Ascending aorta (tissue), 2 donors: ENCODE measurements at regions of chr21 and their contacts with region 1.

Region 1: DNA sequence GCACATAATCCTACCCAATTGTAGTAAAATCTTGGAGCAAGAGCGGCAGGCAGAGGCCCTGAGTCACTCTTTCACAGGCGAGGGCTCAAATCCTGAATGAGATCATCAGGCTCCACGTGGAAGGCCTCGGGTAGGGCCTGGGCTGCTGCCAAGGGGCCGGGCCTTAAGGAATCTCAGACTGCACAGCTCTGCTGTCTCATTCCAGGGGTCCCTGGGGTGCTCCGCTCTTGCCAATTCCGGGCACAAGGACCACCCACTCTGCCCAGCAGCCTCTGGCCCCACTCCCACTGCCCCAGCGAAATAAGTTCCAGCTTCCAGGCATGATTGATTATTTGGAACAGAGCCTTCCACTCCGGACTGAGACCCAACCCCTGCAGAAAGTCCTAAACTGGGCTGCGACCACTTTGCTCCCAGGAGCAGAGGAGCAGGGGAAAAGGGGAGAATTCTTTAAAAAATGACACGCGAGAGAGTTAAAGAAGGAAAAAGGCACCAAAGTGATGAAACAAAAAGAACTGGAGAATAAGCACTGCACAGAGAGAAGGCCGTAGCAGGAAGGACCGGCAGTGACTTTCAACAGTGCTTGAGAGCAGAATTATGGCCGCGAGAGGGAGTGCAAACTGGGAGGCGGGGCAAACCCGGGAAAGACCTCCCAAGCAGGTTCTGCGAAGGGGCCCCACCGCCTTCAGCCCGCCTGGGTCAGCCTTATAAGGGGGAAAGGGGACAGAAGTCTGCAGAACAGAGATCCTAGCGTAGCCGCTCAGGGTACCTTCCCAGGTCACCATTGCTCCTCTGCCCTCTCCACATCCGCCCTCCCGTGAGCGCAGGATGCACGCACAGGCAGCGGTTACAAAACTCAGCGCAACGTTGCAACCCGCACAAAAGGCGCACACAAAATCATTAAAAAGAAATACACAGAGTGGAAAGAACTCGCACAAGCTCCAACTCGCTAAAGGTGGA is 2.0 kb downstream of the ADAMTS1 start:
- DNase-seq: peak; percentile 82 to 97
- H3K4me3 ChIP-seq: peak overlapping the region; percentile 85 to 94
- H3K27ac ChIP-seq: peak overlapping the region; percentile 94 to 98
- H3K4me1 ChIP-seq: peaks cover 4 to 20% of the 10 kb centered on the region in 2 donors
- H3K27me3 ChIP-seq: no peaks in the 10 kb centered on the region
- CTCF ChIP-seq: peak in 2 of 3 experiments; percentile 32 to 43

Region 2: DNA sequence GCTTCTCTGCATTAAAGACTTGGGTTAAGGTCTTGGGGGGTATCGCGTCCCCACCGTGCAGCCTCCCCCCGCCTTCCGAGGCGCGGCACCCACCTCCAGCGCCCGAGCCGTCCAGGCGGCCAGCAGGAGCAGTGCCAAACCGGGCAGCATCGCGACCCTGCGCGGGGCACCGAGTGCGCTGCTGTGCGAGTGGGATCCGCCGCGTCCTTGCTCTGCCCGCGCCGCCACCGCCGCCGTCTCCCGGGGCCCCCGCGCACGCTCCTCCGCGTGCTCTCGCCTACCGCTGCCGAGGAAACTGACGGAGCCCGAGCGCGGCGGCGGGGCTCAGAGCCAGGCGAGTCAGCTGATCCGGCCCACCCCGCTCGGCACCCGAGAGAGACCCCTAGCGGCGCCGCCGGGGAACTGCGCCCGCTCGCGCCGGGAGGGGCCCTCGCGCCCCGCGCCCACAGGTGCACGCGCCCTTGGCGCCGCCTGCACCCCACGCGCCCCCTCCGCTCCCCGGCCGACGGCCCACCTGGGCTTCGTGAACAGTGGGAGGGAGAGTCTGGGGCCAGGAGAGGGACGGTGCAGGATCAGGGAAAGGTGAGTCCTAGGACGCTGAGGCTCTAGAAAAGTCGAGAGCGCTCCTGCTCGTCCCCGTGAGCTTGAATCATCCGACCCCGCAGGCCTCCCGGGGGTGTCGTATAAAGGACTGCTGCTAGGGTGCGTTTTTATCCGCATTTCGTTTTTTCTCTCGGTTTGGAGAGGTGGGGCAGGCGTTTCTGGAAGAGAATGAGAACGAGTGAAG is 672.6 kb before region 1 on chr21 and contains the start of gene APP:
- intact Hi-C with region 1: loop called (anchors 10 kb)
- DNase-seq: peak; percentile 28 to 90
- H3K4me3 ChIP-seq: peak within 1 kb of the TSS; percentile 96 to 98
- H3K27ac ChIP-seq: peak within 1 kb of the TSS; percentile 82 to 84
- H3K4me1 ChIP-seq: peaks cover 0 to 10% of the 10 kb centered on the region in 2 donors
- H3K27me3 ChIP-seq: no peaks in the 10 kb centered on the region
- CTCF ChIP-seq: peak; percentile 70 to 98 (median 71)
- total RNA-seq, gene APP: 350 TPM

Region 3: DNA sequence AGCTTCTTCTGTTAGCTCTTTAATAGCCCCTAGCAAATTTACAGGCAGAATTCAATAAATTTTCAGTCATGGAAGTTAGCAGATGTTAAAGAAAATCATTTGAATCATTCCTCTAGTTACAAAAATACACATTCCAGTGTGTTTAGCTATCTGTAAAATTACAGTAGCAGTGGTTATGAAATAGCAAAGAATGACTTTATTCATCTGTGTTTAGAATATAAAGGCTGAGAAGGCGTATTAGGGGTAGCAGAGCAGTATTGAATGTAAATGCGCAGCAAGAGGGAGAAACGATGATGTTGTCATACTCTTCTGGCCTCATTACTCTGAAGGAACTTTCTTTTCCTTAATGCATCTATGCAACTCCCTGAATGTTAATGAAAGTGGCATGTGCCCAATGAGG is 164.0 kb before region 1 on chr21:
- intact Hi-C with region 1: no loop called
- DNase-seq: no peak
- H3K4me3 ChIP-seq: no peak overlapping the region
- H3K27ac ChIP-seq: no peak overlapping the region
- H3K4me1 ChIP-seq: no peaks in the 10 kb centered on the region
- H3K27me3 ChIP-seq: no peaks in the 10 kb centered on the region
- CTCF ChIP-seq: no peak

Region 4: DNA sequence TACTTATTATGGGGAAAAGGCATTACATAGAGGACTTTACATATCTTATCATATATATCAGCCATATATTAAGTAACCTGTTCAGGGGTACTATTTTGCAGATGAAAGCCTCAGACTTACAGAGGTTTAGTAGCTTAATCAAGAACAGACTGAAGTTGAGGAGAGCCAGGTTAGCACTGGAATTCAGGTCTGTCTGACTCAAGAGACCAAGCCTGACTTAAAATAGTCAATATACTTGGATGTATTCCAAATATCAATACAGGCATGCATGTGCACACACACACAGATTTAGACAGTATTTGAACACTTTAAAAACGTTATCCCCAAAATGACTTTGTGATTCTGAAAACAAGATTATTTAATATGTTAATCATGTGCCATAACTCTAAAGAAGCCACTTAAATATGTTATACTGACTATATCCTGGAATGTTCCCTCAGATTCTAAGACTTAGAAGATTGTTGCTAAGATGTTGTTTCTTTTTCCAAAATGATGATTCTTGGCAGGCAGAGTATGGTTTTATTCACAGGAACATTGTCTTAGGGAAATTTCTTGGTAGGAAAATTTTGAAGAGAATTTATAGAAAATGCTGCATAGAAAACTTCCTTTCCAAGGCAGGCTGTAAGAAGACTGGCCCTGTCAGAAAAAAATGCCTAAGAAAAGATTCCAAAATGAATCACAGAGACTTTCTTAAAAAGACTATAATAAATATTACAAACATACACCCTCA is 59.6 kb before region 1 on chr21:
- intact Hi-C with region 1: loop called (anchors 5 kb)
- DNase-seq: no peak
- H3K4me3 ChIP-seq: no peak overlapping the region
- H3K27ac ChIP-seq: peak overlapping the region; percentile 79 to 85
- H3K4me1 ChIP-seq: peaks cover 16 to 41% of the 10 kb centered on the region in 2 donors
- H3K27me3 ChIP-seq: no peaks in the 10 kb centered on the region
- CTCF ChIP-seq: no peak

Region 5: GRCh38 chr21:27423038-27423437 is 579.8 kb after region 1 on chr21:
- intact Hi-C with region 1: loop called (anchors 5 kb)
- DNase-seq: peak; percentile 23 to 92
- H3K4me3 ChIP-seq: no peak overlapping the region
- H3K27ac ChIP-seq: peak overlapping the region; percentile 60 to 64
- H3K4me1 ChIP-seq: peaks cover 8 to 29% of the 10 kb centered on the region in 2 donors
- H3K27me3 ChIP-seq: no peaks in the 10 kb centered on the region
- CTCF ChIP-seq: no peak

Region 6: DNA sequence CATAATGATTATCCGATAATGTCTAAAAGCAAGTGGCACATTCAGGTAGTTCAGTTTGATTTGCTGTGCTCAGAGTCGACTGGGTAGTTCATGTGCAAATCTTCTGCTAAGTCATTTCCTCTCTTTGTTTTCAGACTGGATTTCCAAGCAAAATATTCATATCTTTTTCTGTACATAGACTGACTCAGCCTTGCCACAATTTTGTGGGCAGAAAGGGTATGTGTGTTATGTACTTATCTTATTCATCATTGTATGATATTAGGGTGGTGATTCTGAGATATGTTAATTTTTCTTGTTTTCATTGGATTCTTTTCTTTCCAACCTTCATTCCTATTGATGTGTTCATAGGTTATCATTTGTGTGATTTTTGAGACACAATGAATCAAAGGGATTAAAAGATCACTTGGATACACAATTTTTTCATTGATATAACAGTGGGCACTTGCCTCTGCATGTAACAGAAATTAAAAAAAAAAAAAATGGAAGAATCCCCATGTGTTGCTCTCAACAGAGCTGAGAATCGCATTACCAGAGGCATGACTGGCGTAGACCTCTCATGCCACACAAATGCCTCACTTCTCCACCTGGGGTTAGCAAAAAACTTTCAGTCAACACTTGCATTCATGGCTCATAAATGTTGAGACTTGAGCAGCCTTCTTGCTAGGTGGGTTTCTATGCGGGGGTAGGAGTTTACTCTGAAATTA is 1793.9 kb after region 1 on chr21:
- intact Hi-C with region 1: loop called (anchors 5 kb)
- DNase-seq: no peak
- H3K4me3 ChIP-seq: peak overlapping the region in 1 of 2 donors; percentile 37
- H3K27ac ChIP-seq: peak overlapping the region; percentile 86 to 92
- H3K4me1 ChIP-seq: peaks cover 3 to 39% of the 10 kb centered on the region in 2 donors
- H3K27me3 ChIP-seq: no peaks in the 10 kb centered on the region
- CTCF ChIP-seq: no peak

Region 7: DNA sequence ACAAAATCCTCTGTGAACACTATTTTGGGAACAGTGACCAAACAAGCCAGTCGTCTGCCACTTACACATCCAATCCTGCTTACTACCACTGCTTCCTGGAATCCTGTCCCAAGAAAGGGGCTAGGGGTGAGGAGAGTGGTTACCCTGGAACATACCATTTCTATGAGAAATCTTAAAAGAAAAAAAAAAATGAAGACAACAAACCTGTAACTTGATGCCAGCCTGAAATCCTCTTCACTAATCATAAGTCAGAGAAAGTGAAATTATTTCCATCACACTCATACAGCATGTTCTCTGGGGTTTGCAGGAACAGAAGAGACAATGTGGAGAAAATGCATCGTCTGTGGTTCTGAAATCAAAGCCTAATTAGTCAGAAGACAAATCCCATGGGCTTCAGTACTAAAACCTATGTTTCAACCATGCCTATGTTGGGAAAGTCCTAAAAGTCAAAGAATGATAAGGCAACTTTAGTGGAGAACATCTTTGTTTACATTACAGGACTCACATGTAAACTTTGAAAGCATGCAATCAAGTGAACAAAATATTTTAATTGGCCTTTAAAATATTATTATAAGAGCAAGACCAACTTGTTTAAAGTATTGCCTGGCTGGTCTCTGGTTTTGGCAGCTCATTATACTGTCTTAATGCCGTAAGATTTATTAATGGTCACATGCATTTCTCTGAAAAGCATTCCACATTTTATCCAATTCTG is 1928.7 kb after region 1 on chr21:
- intact Hi-C with region 1: loop called (anchors 2 kb)
- DNase-seq: peak in 1 of 2 donors; percentile 85
- H3K4me3 ChIP-seq: peak overlapping the region in 1 of 2 donors; percentile 9
- H3K27ac ChIP-seq: peak overlapping the region; percentile 86 to 91
- H3K4me1 ChIP-seq: peaks cover 18 to 57% of the 10 kb centered on the region in 2 donors
- H3K27me3 ChIP-seq: no peaks in the 10 kb centered on the region
- CTCF ChIP-seq: no peak